Colonic mucosa (tissue), 4 donors: ENCODE measurements at regions of chr4 and their contacts with region 1.

Region 1: DNA sequence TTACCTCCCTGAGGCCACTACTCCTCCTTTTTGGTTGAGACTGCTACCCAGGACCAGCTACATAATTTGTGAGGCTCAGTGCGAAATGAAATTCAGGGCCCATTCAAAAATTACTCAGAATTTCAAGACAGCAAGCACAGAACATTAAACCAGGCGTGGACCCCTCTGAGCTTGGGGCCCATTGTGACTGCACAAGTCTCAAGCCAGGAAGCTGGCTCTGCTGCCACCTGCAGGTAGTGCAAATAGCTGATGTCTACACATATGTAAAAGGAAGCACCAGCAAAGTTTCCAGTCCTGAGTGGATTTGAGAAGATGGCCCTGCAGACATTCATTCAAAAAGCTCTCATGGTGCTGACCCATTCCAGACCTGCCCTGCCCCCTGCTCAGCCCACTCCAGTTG is 213.4 kb upstream of the LNX1 start:
- DNase-seq: peak; percentile 67
- H3K4me3 ChIP-seq: no peak overlapping the region
- H3K27ac ChIP-seq: no peak overlapping the region
- H3K4me1 ChIP-seq: no peaks in the 10 kb centered on the region
- H3K27me3 ChIP-seq: no peaks in the 10 kb centered on the region
- CTCF ChIP-seq: peak; percentile 34

Region 2: DNA sequence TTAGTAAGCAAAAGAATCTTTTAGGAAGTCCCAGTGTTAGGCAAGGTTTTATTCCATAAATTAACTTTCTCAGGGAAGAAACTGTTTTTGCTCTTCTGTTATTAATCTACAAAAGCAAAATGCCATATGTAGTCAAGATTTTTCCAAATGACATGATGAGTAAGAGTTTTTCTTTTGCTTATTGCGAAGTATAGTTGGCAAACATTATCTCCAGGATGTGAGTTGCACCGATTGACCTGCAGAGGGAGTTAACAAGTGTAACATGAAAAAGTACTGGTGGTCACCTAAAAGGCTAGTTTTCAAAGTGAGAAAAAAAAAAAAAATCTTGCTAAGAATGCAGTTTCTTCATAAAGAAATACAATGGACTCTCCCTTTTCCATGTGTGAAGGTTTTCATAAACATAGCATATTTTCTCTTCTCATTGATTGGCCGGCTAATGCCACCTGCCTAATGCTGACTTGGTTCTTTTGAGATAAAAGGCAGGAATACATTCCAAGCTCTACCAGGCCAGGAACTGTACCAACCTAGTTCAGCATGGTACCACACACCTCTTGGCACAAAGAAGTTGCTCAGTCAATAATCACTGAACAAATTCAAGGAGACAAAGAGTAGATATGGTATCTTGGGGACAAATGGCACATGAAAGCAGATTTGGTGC is 313.6 kb before region 1 on chr4:
- intact Hi-C with region 1: loop called (anchors 10 kb)
- DNase-seq: peak; percentile 36
- H3K4me3 ChIP-seq: no peak overlapping the region
- H3K27ac ChIP-seq: peak overlapping the region; percentile 30
- H3K4me1 ChIP-seq: no peaks in the 10 kb centered on the region
- H3K27me3 ChIP-seq: no peaks in the 10 kb centered on the region
- CTCF ChIP-seq: peak; percentile 57

Region 3: GRCh38 chr4:53576676-53577372 is 227.9 kb before region 1 on chr4:
- intact Hi-C with region 1: no loop called
- DNase-seq: peak; percentile 57
- H3K4me3 ChIP-seq: no peak overlapping the region
- H3K27ac ChIP-seq: peak overlapping the region; percentile 10
- H3K4me1 ChIP-seq: peaks cover 10% of the 10 kb centered on the region
- H3K27me3 ChIP-seq: no peaks in the 10 kb centered on the region
- CTCF ChIP-seq: no peak

Region 4: DNA sequence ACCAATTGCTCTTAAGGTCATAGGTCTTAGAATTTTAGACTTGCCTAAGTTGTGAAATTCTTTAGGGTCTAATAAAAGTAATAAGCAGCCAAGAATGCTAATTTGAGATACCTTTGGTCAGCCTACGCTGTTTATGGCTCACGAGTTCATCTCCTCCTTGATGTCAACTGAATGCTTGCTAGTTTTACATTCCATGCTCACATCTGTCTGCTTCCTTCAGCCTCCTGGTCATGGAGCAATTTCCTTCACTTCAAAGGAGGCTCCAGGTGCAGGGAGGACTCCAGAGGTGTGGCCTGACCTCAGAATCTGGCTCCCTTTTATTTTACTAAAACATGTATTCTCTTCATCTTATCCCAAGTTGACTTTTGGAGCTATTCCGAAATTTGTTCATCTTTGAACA is 190.1 kb before region 1 on chr4:
- intact Hi-C with region 1: loop called (anchors 10 kb)
- DNase-seq: no peak
- H3K4me3 ChIP-seq: no peak overlapping the region
- H3K27ac ChIP-seq: no peak overlapping the region
- H3K4me1 ChIP-seq: no peaks in the 10 kb centered on the region
- H3K27me3 ChIP-seq: no peaks in the 10 kb centered on the region
- CTCF ChIP-seq: no peak

Region 5: DNA sequence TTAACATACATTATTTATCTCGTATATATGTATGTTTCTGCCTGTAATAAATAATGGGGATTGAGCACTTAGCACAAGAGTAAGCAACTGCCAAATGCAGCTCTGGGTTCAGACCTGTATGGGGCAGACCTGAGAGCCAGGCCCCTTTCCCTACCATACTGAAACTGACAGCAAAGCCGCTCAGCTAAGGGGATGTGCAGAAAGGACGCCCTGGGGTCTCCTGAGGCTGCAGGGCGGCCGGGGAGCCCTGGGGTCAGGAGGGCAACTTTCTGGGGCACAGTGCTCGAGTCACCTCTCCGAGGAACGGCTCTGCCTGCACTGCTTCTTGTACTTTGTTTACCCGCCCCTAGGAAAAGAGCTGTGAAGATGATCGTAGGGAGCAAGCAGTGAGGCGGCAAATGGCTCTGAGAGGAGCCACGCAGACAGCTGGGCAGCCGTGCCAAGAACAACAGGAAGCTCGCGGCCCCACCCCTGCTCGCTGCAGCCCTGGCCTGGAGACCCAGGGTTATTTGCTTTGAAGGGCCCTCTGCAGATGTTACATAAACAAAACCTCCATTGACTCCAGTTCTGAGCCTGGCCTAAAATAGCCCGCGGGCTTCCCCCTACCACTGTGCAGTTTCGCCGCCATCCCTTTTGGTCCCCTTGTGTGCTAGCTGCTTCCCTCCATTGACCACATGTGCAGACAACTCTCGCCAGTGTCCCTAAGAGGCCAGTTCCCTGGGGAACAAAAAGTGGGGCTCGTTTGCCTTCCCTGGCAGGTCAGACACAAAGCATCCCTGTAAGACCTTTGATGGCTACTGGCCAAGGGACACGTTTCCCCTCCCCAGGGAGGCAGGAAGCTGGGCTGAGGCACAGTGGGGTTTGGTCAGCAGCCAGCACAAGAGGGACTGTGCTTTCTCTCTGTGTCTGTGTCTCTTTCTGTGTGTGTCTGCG is 102.1 kb before region 1 on chr4:
- intact Hi-C with region 1: loop called (anchors 5 kb)
- DNase-seq: peak; percentile 83
- H3K4me3 ChIP-seq: peak overlapping the region; percentile 5
- H3K27ac ChIP-seq: peak overlapping the region; percentile 65
- H3K4me1 ChIP-seq: peaks cover 7% of the 10 kb centered on the region
- H3K27me3 ChIP-seq: no peaks in the 10 kb centered on the region
- CTCF ChIP-seq: no peak